Motor neuron (in vitro differentiated cells): ENCODE measurements at regions of chr4 and their contacts with region 1.

Region 1: DNA sequence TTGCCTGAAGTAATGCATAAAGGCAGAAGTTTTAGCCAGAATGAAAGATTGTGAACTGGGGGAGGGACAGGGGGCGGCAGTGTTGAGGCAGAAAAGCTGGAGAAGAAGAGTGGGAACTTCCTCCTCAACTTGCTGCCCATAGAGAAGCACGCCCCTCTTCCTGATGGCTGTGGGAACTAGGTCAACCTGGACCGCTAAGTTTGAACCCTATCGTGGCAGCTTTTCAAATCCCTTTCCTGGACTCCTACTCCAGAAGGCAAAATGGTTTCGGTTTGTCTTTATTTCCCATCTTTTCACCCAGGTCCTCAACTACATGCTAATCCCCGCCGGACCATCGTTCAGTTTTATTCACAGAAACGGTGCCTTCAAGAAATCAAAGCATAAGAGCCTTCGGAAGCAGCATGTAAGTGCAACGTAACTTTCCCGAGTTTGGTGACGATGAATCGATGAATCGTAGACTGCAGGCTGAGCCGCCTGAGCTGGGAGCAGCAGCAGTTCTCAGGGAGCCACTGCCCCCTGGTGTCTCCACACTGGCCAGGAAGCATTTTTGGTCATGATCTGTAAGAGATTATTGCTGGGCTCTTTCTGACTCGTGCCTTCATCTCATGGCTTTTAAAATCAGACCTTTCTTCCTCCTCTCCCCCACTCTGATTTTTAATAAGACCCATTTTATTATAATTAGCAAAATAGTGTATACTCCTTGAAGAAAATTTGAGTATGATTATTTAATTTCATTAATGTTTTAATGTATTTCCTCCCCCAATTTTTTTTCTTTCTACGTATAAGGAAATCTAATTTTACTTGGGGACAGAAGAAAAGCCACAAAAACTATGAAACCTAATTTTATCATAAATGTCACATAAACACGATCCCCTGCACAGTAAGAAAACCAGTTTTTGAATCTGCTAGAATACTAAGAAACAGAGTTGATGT is 21.4 kb downstream of the SPINK2 start:
- ATAC-seq: peak; percentile 93 to 99 (median 96)
- H3K4me3 ChIP-seq: peak overlapping the region; percentile 33 to 50 (median 38)
- H3K27ac ChIP-seq: peak overlapping the region in 1 of 2 donors; percentile 61
- H3K4me1 ChIP-seq: no peaks in the 10 kb centered on the region

Region 2: DNA sequence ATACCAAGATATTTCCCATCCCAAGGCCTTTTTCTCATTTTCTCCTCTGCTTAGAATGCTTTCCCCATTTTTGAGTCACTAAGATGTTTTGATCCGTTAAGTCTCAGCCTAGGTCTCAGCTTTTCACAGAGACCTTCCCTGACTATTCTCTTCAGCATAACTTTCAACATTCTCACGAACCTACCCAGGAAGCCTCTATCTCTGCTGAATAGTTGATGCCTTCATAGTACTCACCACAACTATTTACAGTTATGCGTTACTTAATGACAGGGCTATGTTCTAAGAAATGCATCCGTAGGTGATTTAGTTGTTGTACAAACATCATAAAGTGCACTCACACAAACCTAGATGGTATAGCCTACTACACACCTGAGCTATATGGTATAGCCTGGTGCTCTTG is 230.0 kb before region 1 on chr4:
- in situ Hi-C with region 1: loop called in 2 of 9 experiments (anchors 25 kb)
- ATAC-seq: no peak
- H3K4me3 ChIP-seq: no peak overlapping the region
- H3K27ac ChIP-seq: no peak overlapping the region
- H3K4me1 ChIP-seq: no peaks in the 10 kb centered on the region

Region 3: DNA sequence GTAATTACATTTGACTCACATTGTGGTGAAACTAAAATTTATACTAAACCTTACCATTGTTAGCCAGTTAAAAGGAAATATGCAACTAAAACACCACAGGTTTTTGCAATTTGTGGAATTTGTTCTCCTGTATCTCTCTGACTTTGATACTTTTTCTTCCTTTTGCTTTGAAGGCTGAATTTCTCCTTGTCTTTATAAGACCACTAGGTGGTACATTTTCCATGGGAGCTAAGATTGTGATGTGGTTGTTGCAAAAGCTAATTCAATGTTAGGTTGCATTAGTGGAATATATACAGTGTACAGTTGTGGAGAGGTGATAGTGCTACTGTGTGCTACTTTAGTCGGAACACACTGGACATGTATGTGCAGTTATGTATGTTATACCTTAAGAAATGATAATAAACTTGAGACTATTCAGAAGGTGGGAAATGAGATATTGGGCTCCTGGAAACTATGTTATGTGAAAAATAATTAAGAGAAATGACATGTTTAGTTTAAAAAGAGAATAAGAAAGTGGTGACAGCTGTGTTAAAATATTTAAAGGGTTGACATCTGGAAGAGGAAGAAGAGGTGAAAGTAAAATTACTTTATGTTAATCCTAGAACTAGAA is 224.2 kb before region 1 on chr4:
- in situ Hi-C with region 1: loop called in 2 of 9 experiments (anchors 25 kb)
- ATAC-seq: peak in 2 of 8 experiments; percentile 48 to 63
- H3K4me3 ChIP-seq: no peak overlapping the region
- H3K27ac ChIP-seq: no peak overlapping the region
- H3K4me1 ChIP-seq: no peaks in the 10 kb centered on the region

Region 4: GRCh38 chr4:56972809-56973208 is 172.7 kb after region 1 on chr4:
- in situ Hi-C with region 1: no loop called
- ATAC-seq: no peak
- H3K4me3 ChIP-seq: no peak overlapping the region
- H3K27ac ChIP-seq: no peak overlapping the region
- H3K4me1 ChIP-seq: peaks cover 5 to 7% of the 10 kb centered on the region in 2 donors